Activated CD4-positive, alpha-beta memory T cell treated with anti-CD3 and anti-CD28 coated beads for 36 hours (primary cell): ENCODE measurements at regions of chr10 and their contacts with region 1.

Region 1: DNA sequence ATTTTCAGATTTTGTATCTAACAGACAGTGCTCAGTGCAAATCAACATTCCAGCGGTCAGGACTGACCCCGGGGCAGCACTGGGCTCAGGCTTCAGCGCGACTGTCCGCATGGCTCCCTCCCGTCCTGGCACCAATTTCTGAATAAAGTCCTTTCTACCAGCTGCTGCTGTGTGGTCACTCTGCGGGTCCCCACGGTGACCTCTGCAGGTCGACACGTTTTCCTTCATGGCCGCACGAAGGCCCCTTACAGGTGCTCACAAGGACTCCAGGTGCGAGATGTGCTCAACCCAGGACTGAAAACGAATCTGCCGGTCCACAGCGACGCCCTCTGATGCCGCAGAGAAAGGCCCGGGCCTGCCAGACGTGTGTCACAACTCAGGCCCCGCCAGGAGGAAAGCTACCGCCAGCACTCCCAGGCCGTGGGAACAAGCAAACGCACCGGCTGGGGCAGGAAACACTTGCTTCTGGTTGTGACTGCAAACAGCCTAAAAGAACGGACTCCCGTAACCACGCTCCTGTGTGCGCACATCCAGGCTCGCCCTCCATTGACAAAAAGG is 3.7 kb upstream of the UTF1 start:
- DNase-seq: peak; percentile 43
- H3K4me3 Mint-ChIP-seq: peak overlapping the region; percentile 4
- H3K27ac Mint-ChIP-seq: peak overlapping the region; percentile 10
- H3K4me1 Mint-ChIP-seq: peaks cover 24% of the 10 kb centered on the region
- H3K27me3 Mint-ChIP-seq: peaks cover 40% of the 10 kb centered on the region

Region 2: GRCh38 chr10:133139551-133140065 is 86.7 kb before region 1 on chr10:
- CTCF ChIA-PET with region 1: interaction called, 17 read pairs
- POLR2A ChIA-PET with region 1: no interaction called
- intact Hi-C with region 1: loop called (anchors 1 kb)
- DNase-seq: peak; percentile 8
- H3K4me3 Mint-ChIP-seq: no peak overlapping the region
- H3K27ac Mint-ChIP-seq: no peak overlapping the region
- H3K4me1 Mint-ChIP-seq: peaks cover 3% of the 10 kb centered on the region
- H3K27me3 Mint-ChIP-seq: peaks cover 8% of the 10 kb centered on the region

Region 3: GRCh38 chr10:133144771-133145170 is 81.6 kb before region 1 on chr10:
- CTCF ChIA-PET with region 1: interaction called, 17 read pairs
- POLR2A ChIA-PET with region 1: no interaction called
- intact Hi-C with region 1: loop called (anchors 1 kb)
- DNase-seq: no peak
- H3K4me3 Mint-ChIP-seq: no peak overlapping the region
- H3K27ac Mint-ChIP-seq: no peak overlapping the region
- H3K4me1 Mint-ChIP-seq: peaks cover 3% of the 10 kb centered on the region
- H3K27me3 Mint-ChIP-seq: peaks cover 41% of the 10 kb centered on the region